ENCODE measurements at regions of chr7 and their contacts with region 1.

Region 1: GRCh38 chr7:6008668-6009611 is at the starts of genes AIMP2 and PMS2:
- DNase-seq: peak; percentile 93
- ATAC-seq: peak; percentile 88
- H3K4me3 Mint-ChIP-seq: peak within 1 kb of the TSS; percentile 92
- H3K27ac Mint-ChIP-seq: peak within 1 kb of the TSS; percentile 94
- H3K4me1 Mint-ChIP-seq: peaks cover 34% of the 10 kb centered on the region
- H3K27me3 Mint-ChIP-seq: no peaks in the 10 kb centered on the region
- CTCF ChIP-seq: no peak
- total RNA-seq, gene AIMP2: 37.1 and 37.8 TPM in 2 replicates
- total RNA-seq, gene PMS2: 16.0 and 25.7 TPM in 2 replicates

Region 2: GRCh38 chr7:6026011-6026819 is 17.3 kb after region 1 on chr7:
- CTCF ChIA-PET with region 1: interaction called, 4 read pairs
- POLR2A ChIA-PET with region 1: interaction called, 12 read pairs
- intact Hi-C with region 1: loop called (anchors 1 kb)
- DNase-seq: peak; percentile 44
- ATAC-seq: peak; percentile 98
- H3K4me3 Mint-ChIP-seq: peak overlapping the region; percentile 77
- H3K27ac Mint-ChIP-seq: peak overlapping the region; percentile 91
- H3K4me1 Mint-ChIP-seq: peaks cover 26% of the 10 kb centered on the region
- H3K27me3 Mint-ChIP-seq: no peaks in the 10 kb centered on the region
- CTCF ChIP-seq: no peak

Region 3: GRCh38 chr7:6367701-6368211 is 358.8 kb after region 1 on chr7:
- CTCF ChIA-PET with region 1: no interaction called
- POLR2A ChIA-PET with region 1: interaction called, 12 read pairs
- intact Hi-C with region 1: no loop called
- DNase-seq: no peak
- ATAC-seq: no peak
- H3K4me3 Mint-ChIP-seq: no peak overlapping the region
- H3K27ac Mint-ChIP-seq: no peak overlapping the region
- H3K4me1 Mint-ChIP-seq: peaks cover 5% of the 10 kb centered on the region
- H3K27me3 Mint-ChIP-seq: no peaks in the 10 kb centered on the region
- CTCF ChIP-seq: no peak

Measured in activated B cell treated with CpG ODN at 0.5 μM for 24 hours (primary cell).